Gastrocnemius medialis (tissue), 4 donors: ENCODE measurements at regions of chr12 and their contacts with region 1.

Region 1: GRCh38 chr12:95217377-95218149 is at the starts of genes FGD6 and VEZT:
- DNase-seq: peak; percentile 99
- ATAC-seq: peak; percentile 89 to 93
- H3K4me3 ChIP-seq: peak within 1 kb of the TSS; percentile 76 to 94 (median 88)
- H3K27ac ChIP-seq: peak within 1 kb of the TSS; percentile 90 to 98 (median 96)
- H3K4me1 ChIP-seq: peaks cover 43 to 47% of the 10 kb centered on the region in 2 donors
- H3K27me3 ChIP-seq: no peaks in the 10 kb centered on the region
- CTCF ChIP-seq: peak; percentile 36 to 53 (median 49)
- POLR2A ChIP-seq: peak; percentile 77 to 81
- total RNA-seq, gene FGD6: 2.9 to 8.4 (median 4.4) TPM
- total RNA-seq, gene VEZT: 100 to 131 (median 118) TPM

Region 2: GRCh38 chr12:95072900-95073697 is 144.5 kb before region 1 on chr12 and contains the start of gene NR2C1:
- in situ Hi-C with region 1: no loop called
- intact Hi-C with region 1: loop called (anchors 2 kb)
- DNase-seq: peak; percentile 84 to 92
- ATAC-seq: peak; percentile 95 to 97
- H3K4me3 ChIP-seq: peak within 1 kb of the TSS; percentile 77 to 95 (median 82)
- H3K27ac ChIP-seq: peak within 1 kb of the TSS; percentile 79 to 91 (median 84)
- H3K4me1 ChIP-seq: peaks cover 9 to 15% of the 10 kb centered on the region in 2 donors
- H3K27me3 ChIP-seq: no peaks in the 10 kb centered on the region
- CTCF ChIP-seq: peak in 1 of 5 experiments; percentile 55
- POLR2A ChIP-seq: peak in 1 of 2 donors; percentile 34
- total RNA-seq, gene NR2C1: 16.2 to 48.8 (median 22.5) TPM

Region 3: DNA sequence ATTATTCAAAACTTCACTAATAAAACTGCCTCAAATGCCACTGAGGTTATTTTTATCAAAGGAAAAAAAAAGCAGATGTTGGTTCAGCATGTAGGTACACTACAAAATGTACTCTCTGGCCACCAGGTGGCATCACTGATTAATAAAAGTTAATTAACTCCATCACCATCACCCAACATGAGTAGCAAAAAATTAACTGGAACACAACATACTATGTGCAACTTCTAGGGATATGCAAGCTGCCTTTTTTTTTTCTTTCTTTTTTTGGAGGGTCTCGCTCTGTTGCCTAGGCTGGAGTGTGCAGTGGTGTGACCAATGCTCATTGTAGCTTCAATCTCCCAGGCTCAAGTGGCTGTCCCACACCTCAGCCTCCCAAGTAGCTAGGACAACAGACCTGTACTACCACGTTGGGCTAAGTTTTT is 100.4 kb before region 1 on chr12:
- in situ Hi-C with region 1: no loop called
- intact Hi-C with region 1: loop called (anchors 1 kb)
- DNase-seq: peak; percentile 32 to 53
- ATAC-seq: peak; percentile 87 to 92
- H3K4me3 ChIP-seq: no peak overlapping the region
- H3K27ac ChIP-seq: peak overlapping the region in 2 of 4 donors; percentile 22 to 59
- H3K4me1 ChIP-seq: peaks cover 16 to 23% of the 10 kb centered on the region in 2 donors
- H3K27me3 ChIP-seq: no peaks in the 10 kb centered on the region
- CTCF ChIP-seq: peak; percentile 52 to 80 (median 72)
- POLR2A ChIP-seq: no peak

Region 4: DNA sequence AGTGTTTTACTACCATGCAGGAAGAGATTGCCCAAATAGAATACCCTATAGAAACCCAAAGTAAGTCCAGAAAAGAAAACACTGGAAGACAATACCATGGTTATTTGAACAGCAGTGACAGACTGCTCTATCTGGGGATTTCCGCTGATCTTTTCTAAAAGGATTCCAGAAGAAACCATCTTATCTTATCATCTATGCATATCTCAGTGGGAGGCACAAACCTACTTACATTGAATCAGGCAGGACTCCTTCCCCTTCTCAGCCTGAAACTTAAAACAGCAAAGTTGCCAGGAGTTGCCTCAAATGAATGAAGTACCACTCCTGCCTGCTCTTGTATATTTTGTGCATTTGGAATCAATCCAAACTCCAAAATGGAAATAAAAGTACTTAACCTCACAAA is 87.5 kb before region 1 on chr12:
- in situ Hi-C with region 1: no loop called
- intact Hi-C with region 1: loop called (anchors 5 kb)
- DNase-seq: no peak
- ATAC-seq: no peak
- H3K4me3 ChIP-seq: no peak overlapping the region
- H3K27ac ChIP-seq: no peak overlapping the region
- H3K4me1 ChIP-seq: peaks cover 0 to 4% of the 10 kb centered on the region in 2 donors
- H3K27me3 ChIP-seq: no peaks in the 10 kb centered on the region
- CTCF ChIP-seq: no peak
- POLR2A ChIP-seq: no peak